ENCODE measurements at regions of chr19 and their contacts with region 1.

Region 1: DNA sequence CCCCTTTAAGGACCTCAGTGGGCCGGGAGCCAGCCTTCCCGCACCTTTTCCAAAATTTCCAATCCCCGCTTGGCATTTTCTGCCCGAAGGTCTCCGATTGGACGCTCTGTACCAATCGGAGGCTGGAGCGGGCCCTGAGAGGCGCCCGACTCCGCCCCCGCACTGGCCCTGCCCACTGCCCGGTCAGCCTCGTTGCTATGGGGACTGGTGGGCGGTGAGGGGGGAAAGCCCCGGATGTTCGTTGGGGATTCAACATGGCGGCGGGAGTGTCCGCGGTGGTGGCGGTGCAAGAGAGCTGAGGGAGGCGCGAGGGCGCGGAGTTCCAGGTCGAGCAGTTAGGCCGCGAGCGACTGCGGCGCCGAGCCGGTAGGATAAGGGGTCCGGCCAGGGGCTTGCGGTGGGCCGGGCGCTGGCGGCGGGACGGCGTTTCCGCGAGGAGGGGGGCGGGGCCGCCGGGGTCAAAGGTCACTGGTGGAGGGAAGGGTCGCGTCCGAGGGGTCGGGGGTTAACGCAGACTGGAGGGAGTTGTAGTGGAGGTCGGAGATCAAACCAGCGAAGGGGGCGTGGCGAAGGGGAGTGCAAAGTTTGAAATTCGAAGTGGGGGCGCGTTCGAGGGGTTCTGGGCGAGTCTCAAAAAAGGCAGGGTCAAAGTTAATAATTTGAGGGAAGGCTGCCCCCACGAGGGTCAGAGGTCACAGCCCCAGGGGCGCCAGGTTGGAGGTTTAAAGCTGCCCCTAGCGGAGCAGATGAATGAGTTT is at the start of gene PAK4:
- DNase-seq: peak; percentile 98 to 99 (median 99)
- ATAC-seq: peak; percentile 96
- H3K4me3 ChIP-seq: peak within 1 kb of the TSS; percentile 83 to 94
- H3K27ac ChIP-seq: peak within 1 kb of the TSS; percentile 88 to 91 (median 89)
- H3K4me1 ChIP-seq: peaks cover 36% of the 10 kb centered on the region
- H3K27me3 ChIP-seq: no peaks in the 10 kb centered on the region
- CTCF ChIP-seq: no peak
- POLR2A ChIP-seq: peak in 2 of 3 donors; percentile 77 to 84
- total RNA-seq, gene PAK4: 18.9 to 40.2 TPM

Region 2: GRCh38 chr19:39187559-39187957 is 61.8 kb after region 1 on chr19:
- intact Hi-C with region 1: loop called (anchors 5 kb)
- DNase-seq: no peak
- ATAC-seq: no peak
- H3K4me3 ChIP-seq: no peak overlapping the region
- H3K27ac ChIP-seq: no peak overlapping the region
- H3K4me1 ChIP-seq: peaks cover 7% of the 10 kb centered on the region
- H3K27me3 ChIP-seq: no peaks in the 10 kb centered on the region
- CTCF ChIP-seq: peak in 1 of 7 experiments; percentile 16
- POLR2A ChIP-seq: no peak

Region 3: DNA sequence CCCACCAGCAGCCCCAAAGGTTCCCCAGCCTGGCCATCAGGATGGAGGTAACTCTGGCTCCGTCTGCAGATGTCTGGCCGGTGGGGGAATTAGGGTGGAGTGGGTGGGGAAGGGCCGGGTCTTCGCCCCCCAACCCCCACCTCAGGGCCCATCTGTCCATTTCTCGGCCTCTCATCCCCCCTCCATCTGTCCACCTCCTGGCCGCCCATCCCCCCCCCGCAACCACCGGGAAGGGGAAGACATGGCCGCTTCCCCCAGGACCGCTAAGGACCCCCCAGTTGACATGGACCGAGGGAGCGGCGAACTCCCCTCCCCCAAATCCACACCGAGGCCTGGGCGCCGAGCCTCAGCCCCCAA is 194.1 kb after region 1 on chr19:
- intact Hi-C with region 1: loop called (anchors 5 kb)
- DNase-seq: no peak
- ATAC-seq: no peak
- H3K4me3 ChIP-seq: peak overlapping the region in 1 of 2 donors; percentile 29
- H3K27ac ChIP-seq: no peak overlapping the region
- H3K4me1 ChIP-seq: peaks cover 12% of the 10 kb centered on the region
- H3K27me3 ChIP-seq: no peaks in the 10 kb centered on the region
- CTCF ChIP-seq: no peak
- POLR2A ChIP-seq: no peak